Activated CD8-positive, alpha-beta T cell treated with anti-CD3 and anti-CD28 coated beads for 36 hours (primary cell): ENCODE measurements at regions of chr1 and their contacts with region 1.

Region 1: DNA sequence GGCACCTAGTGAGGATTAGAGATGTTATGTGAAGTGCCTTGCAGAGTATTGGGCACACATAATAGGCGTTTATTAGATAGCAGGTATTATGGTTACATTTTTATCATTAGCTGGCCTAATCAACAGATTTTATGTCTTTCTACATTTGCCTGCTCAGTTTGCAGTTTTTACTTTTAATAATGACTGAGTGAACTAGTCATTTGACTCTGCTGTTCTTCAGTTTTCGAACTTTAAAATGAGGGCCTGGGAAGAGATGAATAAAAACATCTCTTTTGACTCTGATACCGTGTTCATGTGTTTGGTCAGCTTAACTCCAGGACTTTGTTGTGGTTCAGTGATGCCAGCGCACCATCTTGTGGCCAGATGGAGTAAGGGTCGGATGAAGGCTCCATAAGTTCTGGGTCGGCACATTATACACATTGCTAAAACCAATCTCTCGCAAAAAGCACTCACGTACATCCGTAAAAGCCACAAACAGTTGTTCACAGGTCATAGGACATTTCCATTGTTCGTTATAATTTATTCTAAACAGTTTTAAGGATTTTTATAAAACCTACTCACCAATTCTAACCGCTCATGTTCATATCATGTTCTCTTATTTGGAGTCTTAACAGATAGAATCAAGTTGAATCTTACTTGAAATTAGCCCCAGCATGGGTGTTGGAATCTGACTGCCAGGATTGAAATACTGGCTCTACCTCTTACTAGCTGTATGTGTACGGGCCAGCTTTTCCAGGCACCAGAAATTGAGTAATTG is 78.4 kb upstream of the GPR88 start:
- DNase-seq: peak; percentile 88
- ATAC-seq: peak; percentile 83
- H3K4me3 Mint-ChIP-seq: no peak overlapping the region
- H3K27ac Mint-ChIP-seq: peak overlapping the region; percentile 67
- H3K4me1 Mint-ChIP-seq: peaks cover 35% of the 10 kb centered on the region
- H3K27me3 Mint-ChIP-seq: no peaks in the 10 kb centered on the region
- CTCF ChIP-seq: peak; percentile 83

Region 2: DNA sequence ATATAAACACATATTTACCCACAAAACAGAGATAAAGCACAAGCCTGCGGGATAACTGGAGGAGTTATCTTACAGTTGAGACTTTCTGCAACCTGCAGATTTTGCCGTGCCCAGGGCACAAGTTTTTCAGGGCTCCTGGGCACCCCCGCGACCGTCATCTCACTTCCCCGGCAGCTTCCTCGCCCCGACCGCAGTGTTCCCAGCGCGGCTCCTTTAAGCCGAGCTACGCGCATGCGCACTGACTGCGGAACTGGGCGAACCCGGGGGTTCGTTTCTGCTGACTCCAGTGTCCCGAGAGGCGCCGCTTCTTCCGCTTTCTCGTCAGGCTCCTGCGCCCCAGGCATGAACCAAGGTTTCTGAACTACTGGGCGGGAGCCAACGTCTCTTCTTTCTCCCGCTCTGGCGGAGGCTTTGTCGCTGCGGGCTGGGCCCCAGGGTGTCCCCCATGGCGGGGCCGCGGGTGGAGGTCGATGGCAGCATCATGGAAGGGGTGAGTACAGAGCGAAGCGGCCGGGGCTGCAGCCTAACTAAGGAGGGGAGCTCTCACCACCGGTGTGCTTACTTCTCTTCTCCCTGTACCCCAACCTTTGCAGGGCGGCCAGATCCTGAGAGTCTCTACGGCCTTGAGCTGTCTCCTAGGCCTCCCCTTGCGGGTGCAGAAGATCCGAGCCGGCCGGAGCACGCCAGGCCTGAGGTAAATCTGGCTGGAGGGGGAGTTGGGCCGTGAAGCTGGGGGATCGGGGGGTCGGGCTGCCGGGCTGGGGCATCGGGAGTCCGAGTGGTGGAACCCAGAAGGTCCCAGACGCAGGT is 193.4 kb before region 1 on chr1 and contains the start of gene RTCA:
- CTCF ChIA-PET with region 1: interaction called, 21 read pairs
- POLR2A ChIA-PET with region 1: no interaction called
- intact Hi-C with region 1: loop called (anchors 10 kb)
- DNase-seq: peak; percentile 96
- ATAC-seq: peak; percentile 95
- H3K4me3 Mint-ChIP-seq: peak within 1 kb of the TSS; percentile 97
- H3K27ac Mint-ChIP-seq: peak within 1 kb of the TSS; percentile 98
- H3K4me1 Mint-ChIP-seq: peaks cover 35% of the 10 kb centered on the region
- H3K27me3 Mint-ChIP-seq: no peaks in the 10 kb centered on the region
- CTCF ChIP-seq: no peak
- total RNA-seq, gene RTCA: 44.7 to 46.0 TPM

Region 3: DNA sequence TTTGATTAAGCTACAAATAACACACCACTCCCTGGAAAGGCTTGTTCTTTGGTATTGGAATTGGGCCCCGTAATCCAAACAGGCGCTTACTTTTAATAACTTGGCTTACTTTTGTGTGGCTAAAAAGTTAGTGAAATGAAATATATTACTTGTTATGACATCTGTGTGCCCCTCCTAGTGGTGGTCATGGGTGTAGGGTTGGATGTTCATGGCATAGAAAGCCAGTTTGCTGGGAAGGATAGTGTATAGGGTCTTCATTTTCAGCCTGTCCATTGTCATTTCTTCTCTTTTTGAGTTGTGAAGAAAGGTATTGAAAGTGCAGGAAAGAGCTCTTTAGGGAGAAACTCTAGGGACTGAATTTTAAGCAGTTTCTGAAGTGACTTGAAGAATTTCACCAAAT is 101.3 kb before region 1 on chr1:
- CTCF ChIA-PET with region 1: interaction called, 77 read pairs
- POLR2A ChIA-PET with region 1: interaction called, 10 read pairs
- intact Hi-C with region 1: no loop called
- DNase-seq: peak; percentile 46
- ATAC-seq: no peak
- H3K4me3 Mint-ChIP-seq: no peak overlapping the region
- H3K27ac Mint-ChIP-seq: peak overlapping the region; percentile 47
- H3K4me1 Mint-ChIP-seq: peaks cover 86% of the 10 kb centered on the region
- H3K27me3 Mint-ChIP-seq: no peaks in the 10 kb centered on the region
- CTCF ChIP-seq: peak; percentile 59

Region 4: GRCh38 chr1:100443811-100444571 is 15.5 kb before region 1 on chr1:
- CTCF ChIA-PET with region 1: interaction called, 27 read pairs
- POLR2A ChIA-PET with region 1: interaction called, 5 read pairs
- intact Hi-C with region 1: no loop called
- DNase-seq: peak; percentile 49
- ATAC-seq: peak; percentile 76
- H3K4me3 Mint-ChIP-seq: peak overlapping the region; percentile 72
- H3K27ac Mint-ChIP-seq: peak overlapping the region; percentile 95
- H3K4me1 Mint-ChIP-seq: peaks cover 78% of the 10 kb centered on the region
- H3K27me3 Mint-ChIP-seq: no peaks in the 10 kb centered on the region
- CTCF ChIP-seq: no peak

Region 5: DNA sequence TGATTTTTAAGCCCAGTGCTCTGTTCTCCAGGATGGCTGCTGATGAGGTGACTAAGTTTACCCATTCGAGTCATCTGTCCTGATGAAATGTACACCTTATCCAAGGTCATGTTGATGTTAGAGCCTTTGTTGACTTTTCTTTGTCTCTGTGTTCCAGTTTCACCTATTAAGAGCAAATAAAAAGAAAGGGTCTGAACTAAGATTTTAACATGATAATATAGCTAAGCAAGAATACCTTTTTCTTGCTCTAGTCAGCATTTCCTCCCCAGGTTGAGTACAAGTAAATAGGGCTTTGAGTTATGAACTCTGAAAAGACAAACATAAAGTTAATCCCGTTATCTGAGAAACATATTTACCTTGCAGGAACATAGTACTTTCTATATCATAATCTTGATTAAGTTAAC is 26.3 kb after region 1 on chr1:
- CTCF ChIA-PET with region 1: interaction called, 10 read pairs
- POLR2A ChIA-PET with region 1: no interaction called
- intact Hi-C with region 1: no loop called
- DNase-seq: no peak
- ATAC-seq: no peak
- H3K4me3 Mint-ChIP-seq: no peak overlapping the region
- H3K27ac Mint-ChIP-seq: no peak overlapping the region
- H3K4me1 Mint-ChIP-seq: peaks cover 1% of the 10 kb centered on the region
- H3K27me3 Mint-ChIP-seq: no peaks in the 10 kb centered on the region
- CTCF ChIP-seq: no peak

Region 6: GRCh38 chr1:100556925-100557605 is 97.5 kb after region 1 on chr1:
- CTCF ChIA-PET with region 1: no interaction called
- POLR2A ChIA-PET with region 1: no interaction called
- intact Hi-C with region 1: no loop called
- DNase-seq: no peak
- ATAC-seq: no peak
- H3K4me3 Mint-ChIP-seq: no peak overlapping the region
- H3K27ac Mint-ChIP-seq: no peak overlapping the region
- H3K4me1 Mint-ChIP-seq: no peaks in the 10 kb centered on the region
- H3K27me3 Mint-ChIP-seq: peaks cover 2% of the 10 kb centered on the region
- CTCF ChIP-seq: no peak